T-cell (primary cell): ENCODE measurements at regions of chr10 and their contacts with region 1.

Region 1: GRCh38 chr10:14588084-14588937 is 186.4 kb downstream of the FAM107B start:
- DNase-seq: peak in 4 of 35 experiments; percentile 20 to 72 (median 22)
- ATAC-seq: peak; percentile 3 to 36 (median 28)
- H3K4me3 ChIP-seq: peak overlapping the region; percentile 4 to 33
- H3K4me3 Mint-ChIP-seq: peak overlapping the region; percentile 61 to 70 (median 69)
- H3K27ac ChIP-seq: peak overlapping the region; percentile 95
- H3K27ac Mint-ChIP-seq: peak overlapping the region; percentile 92 to 99
- H3K4me1 ChIP-seq: peaks cover 57 to 74% of the 10 kb centered on the region in 2 experiments
- H3K4me1 Mint-ChIP-seq: peaks cover 93 to 97% (median 95%) of the 10 kb centered on the region in 3 donors
- H3K27me3 ChIP-seq: no peaks in the 10 kb centered on the region
- H3K27me3 Mint-ChIP-seq: no peaks in the 10 kb centered on the region

Region 2: GRCh38 chr10:14564268-14564744 is 24.0 kb before region 1 on chr10:
- CTCF ChIA-PET with region 1: interaction called in 1 of 2 experiments, 5 read pairs
- POLR2A ChIA-PET with region 1: interaction called, 12 to 64 read pairs
- DNase-seq: peak in 10 of 35 experiments; percentile 20 to 75 (median 38)
- ATAC-seq: peak; percentile 46 to 68 (median 62)
- H3K4me3 ChIP-seq: peak overlapping the region; percentile 25
- H3K4me3 Mint-ChIP-seq: peak overlapping the region; percentile 60 to 85 (median 69)
- H3K27ac ChIP-seq: peak overlapping the region; percentile 95
- H3K27ac Mint-ChIP-seq: peak overlapping the region; percentile 92 to 95
- H3K4me1 ChIP-seq: peaks cover 58 to 81% of the 10 kb centered on the region in 2 experiments
- H3K4me1 Mint-ChIP-seq: peaks cover 93 to 98% (median 94%) of the 10 kb centered on the region in 3 donors
- H3K27me3 ChIP-seq: no peaks in the 10 kb centered on the region
- H3K27me3 Mint-ChIP-seq: no peaks in the 10 kb centered on the region

Region 3: DNA sequence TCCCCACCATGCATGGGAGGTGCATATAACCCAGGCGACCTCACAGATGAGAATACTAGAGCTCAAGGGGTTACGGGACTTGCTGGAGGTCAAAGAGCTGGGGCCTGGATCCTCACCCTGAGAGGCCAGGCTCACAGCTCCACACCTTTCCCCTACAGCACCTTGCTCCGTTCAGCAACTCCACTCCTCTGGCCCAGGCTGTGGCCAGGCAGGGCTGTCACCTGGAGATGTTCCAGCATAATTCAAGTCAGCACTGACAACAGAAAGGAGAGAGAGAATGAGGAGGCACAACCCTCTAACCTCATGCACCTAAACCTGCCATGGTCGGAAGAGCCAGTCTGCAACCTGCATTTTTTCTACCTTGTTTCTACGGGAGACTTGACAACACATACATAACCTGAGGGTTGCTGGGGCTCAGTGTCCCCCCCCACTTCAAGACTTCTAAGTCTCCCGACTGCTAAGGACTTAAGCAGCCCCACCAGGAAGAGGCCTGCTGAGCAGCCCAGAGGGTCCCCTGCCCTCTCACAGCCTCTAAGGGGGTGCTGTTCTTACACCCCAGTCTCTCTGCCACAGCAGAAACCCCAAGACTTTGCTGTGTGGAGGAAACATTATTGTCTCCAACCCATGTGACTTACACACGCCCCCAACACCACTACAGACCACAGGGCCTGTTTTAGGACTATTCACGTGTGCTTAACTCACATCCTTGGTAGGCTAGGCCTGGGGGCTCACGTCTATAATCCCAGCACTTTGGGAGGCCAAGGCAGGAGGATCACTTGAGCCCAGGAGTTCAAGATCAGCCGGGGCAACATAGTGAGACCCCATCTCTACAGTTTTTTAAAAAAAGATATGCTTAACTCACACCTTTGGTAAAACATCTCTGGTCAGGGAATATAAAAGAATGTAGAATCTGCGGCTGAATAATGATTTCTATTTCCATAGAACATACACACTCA is 10.8 kb after region 1 on chr10:
- CTCF ChIA-PET with region 1: interaction called, 3 read pairs
- POLR2A ChIA-PET with region 1: interaction called, 9 to 40 read pairs
- DNase-seq: peak in 9 of 35 experiments; percentile 9 to 61 (median 47)
- ATAC-seq: peak in 1 of 4 experiments; percentile 56
- H3K4me3 ChIP-seq: no peak overlapping the region
- H3K4me3 Mint-ChIP-seq: peak overlapping the region in 1 of 3 donors; percentile 92
- H3K27ac ChIP-seq: peak overlapping the region; percentile 44
- H3K27ac Mint-ChIP-seq: peak overlapping the region; percentile 82 to 83
- H3K4me1 ChIP-seq: peaks cover 20 to 56% of the 10 kb centered on the region in 2 experiments
- H3K4me1 Mint-ChIP-seq: peaks cover 84 to 93% (median 88%) of the 10 kb centered on the region in 3 donors
- H3K27me3 ChIP-seq: no peaks in the 10 kb centered on the region
- H3K27me3 Mint-ChIP-seq: no peaks in the 10 kb centered on the region